AG04450 (cell line): ENCODE measurements at regions of chr1 and their contacts with region 1.

Region 1: DNA sequence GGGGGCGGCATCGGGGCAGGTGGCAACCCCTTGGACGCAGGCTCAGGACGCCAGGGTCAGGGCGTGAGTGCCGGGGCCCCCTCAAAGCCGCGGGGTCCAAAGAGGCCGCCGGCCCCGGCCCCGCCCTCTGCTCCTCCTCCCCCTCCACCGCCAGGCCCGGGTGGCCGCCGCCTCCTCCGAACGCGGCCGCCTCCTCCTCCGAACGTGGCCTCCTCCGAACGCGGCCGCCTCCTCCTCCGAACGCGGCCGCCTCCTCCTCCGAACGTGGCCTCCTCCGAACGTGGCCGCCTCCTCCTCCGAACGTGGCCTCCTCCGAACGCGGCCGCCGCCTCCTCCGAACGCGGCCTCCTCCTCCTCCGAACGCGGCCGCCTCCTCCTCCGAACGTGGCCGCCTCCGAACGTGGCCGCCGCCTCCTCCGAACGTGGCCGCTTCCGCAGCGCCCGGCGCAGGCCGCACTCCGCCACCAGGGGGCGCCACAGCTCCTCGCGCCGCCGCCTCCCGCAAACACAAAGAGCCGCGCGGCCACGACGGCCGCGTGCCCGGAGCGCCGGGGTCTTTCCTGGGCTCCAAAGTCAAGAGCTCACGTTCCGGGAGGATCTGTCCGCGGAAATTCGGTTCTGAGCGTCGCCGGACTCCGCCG is 19.3 kb upstream of the SAMD11 start:
- DNase-seq: no peak
- H3K4me3 ChIP-seq: peak overlapping the region; percentile 52
- H3K27ac ChIP-seq: no peak overlapping the region
- H3K27me3 ChIP-seq: peaks cover 1% of the 10 kb centered on the region
- CTCF ChIP-seq: peak; percentile 62

Region 2: DNA sequence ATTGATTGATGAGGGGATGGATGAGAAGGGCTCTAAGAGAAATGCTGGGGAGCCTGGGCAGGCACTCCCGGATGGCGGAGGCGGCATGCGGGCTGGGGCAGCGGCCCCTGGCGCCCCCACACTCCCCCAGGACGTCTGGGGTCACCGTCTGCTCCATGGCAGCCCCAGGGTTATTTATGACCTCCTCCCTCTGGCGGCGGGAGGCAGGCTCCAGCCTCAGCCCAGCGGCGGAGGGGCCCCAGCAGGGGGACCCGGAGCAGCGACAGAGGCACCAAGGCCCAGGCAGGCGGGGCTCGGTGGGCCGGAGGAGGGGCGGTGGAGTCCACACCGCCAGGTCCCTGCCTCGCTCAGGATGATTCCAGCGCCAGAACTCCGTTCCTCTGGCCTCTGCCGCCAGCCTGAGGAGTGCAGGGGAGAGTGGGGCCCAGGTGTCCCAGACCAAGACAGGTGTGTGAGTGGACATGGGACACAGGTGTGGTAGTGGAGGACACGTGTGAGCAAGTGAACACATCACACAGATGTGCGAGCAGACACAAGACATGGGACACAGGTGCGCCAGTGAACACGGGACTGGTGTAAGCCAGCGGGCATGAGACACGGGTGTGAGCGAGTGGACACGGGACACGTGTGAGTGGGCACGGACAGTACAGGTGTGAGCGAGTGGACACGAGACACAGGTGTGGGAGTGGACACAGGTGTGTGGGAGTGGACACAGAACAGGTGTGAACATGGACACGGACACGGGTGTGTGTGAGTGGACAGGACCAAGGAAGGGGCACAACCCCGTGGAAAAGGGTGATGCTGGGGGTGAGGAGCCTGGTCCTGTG is 16.8 kb after region 1 on chr1:
- CTCF ChIA-PET with region 1: interaction called, 15 read pairs
- POLR2A ChIA-PET with region 1: interaction called, 3 read pairs
- DNase-seq: peak; percentile 36
- H3K4me3 ChIP-seq: no peak overlapping the region
- H3K27ac ChIP-seq: no peak overlapping the region
- H3K27me3 ChIP-seq: peaks cover 9% of the 10 kb centered on the region
- CTCF ChIP-seq: peak; percentile 58

Region 3: GRCh38 chr1:940106-941014 is 35.9 kb after region 1 on chr1:
- CTCF ChIA-PET with region 1: interaction called, 10 read pairs
- POLR2A ChIA-PET with region 1: interaction called, 3 read pairs
- DNase-seq: no peak
- H3K4me3 ChIP-seq: peak overlapping the region; percentile 32; the same call in 1 of the 2 replicates
- H3K27ac ChIP-seq: peak overlapping the region; percentile 11
- H3K27me3 ChIP-seq: peaks cover 4% of the 10 kb centered on the region
- CTCF ChIP-seq: no peak

Region 4: GRCh38 chr1:951364-951763 is 46.9 kb after region 1 on chr1:
- CTCF ChIA-PET with region 1: interaction called, 12 read pairs
- POLR2A ChIA-PET with region 1: no interaction called
- DNase-seq: no peak
- H3K4me3 ChIP-seq: no peak overlapping the region
- H3K27ac ChIP-seq: no peak overlapping the region
- H3K27me3 ChIP-seq: no peaks in the 10 kb centered on the region
- CTCF ChIP-seq: peak; percentile 55

Region 5: DNA sequence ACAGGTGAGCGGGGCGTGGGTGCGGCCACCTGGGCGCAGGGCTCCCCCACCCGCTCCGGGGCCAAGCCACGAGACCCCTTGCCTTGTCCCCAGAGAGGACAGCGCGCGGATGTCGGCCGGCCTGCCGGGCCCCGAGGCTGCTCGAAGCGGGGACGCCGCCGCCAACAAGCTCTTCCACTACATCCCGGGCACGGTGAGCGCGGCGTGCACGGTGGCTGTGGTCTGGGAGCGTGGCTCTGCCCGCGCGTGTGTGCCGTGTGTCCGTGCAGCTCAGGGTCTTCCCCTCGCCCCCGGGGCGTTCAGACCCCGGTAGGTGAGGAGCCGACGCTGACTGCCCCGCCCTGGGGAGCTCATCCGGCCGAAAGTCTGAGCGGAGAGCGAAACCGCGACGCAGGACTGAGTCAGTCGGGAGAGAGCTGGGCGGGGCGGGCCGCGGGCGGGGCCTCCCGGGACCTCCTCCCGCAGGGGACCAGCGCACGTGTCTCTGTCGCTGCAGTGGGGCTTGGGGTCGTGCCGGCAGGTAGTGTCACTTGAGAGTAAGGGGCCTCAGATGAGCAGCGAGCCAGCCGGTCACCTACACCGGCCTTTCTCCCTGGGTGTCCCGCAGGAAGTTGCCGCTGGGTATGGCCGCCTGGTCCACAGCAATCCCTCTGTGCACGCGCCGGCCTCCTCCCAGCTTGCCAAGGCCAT is 62.3 kb after region 1 on chr1:
- CTCF ChIA-PET with region 1: interaction called, 11 read pairs
- POLR2A ChIA-PET with region 1: interaction called, 5 read pairs
- DNase-seq: no peak
- H3K4me3 ChIP-seq: peak overlapping the region; percentile 74
- H3K27ac ChIP-seq: no peak overlapping the region
- H3K27me3 ChIP-seq: peaks cover 18% of the 10 kb centered on the region
- CTCF ChIP-seq: no peak

Region 6: DNA sequence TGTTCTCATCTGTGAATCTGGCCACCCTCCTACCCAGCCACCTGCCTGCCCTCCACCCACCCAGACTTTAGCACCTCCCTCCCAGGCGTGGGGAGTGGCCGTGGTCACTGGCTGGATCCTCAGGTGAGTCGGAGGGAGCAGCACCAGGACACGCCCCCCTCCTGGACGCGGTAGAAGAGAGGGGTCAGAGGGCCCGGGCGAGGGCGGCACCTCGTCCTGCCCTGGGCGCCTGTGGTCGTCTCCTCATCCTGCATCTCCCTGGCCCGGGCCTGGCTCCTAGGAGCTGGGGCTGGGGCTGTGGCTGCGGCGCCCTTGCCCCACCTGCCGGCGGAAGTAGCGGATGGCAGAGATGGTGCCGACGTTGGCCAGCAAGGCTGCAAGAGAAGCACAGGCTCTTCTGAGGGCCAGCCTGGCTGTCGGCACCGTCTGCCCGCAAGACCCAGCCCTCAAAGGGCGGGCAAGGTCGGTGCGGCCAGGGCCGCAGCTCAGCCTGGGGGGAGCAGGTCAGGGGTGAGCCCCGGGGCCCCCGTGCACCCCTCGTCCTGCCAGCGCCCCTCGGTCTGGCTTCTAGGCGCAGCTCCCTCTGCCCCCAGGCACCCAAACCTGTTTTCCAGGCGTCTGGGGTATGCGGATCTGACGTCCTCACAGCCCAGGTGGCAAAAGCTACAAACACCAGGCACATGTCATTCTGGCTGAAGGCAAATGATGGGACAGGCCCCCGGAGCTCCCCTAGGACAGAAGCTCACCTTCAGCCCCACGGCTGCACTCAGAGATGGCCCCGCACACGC is 71.7 kb after region 1 on chr1:
- CTCF ChIA-PET with region 1: interaction called, 14 read pairs
- POLR2A ChIA-PET with region 1: no interaction called
- DNase-seq: no peak
- H3K4me3 ChIP-seq: no peak overlapping the region
- H3K27ac ChIP-seq: no peak overlapping the region
- H3K27me3 ChIP-seq: peaks cover 18% of the 10 kb centered on the region
- CTCF ChIP-seq: peak; percentile 69

Region 7: DNA sequence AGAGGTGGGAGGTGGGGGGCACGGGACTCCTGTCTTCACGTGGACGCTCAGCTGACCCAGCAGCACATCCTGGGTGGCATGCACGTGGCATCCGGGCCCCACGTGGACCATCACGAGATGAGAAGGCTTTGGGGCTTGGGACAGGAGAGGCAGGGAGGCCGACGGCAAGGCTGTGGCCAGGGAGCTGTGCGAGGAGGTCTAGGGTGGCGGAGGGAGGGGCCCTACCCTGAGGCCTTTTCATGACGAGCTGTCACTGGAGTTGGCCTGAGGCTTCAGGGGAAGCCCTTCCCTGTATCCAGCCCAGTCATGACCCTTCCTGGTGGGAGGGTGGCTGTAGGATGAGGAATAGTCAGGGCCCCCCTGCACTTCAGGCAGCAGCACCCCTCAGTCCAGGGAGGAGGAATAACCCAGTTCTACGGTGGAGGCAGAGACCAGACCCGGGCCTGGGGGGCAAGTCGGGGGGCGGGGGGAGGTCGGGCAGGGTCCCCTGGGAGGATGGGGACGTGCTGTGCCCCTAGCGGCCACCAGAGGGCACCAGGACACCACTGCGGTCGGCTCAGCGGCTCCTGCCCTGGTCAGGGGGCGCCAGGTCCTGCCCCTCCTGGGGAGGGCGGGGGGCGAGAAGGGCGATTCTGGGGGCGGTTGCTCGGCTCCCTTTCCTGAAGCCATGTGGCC is 79.5 kb after region 1 on chr1:
- CTCF ChIA-PET with region 1: interaction called, 10 read pairs
- POLR2A ChIA-PET with region 1: no interaction called
- DNase-seq: no peak
- H3K4me3 ChIP-seq: peak overlapping the region; percentile 17
- H3K27ac ChIP-seq: no peak overlapping the region
- H3K27me3 ChIP-seq: peaks cover 35% of the 10 kb centered on the region
- CTCF ChIP-seq: peak; percentile 78

Region 8: DNA sequence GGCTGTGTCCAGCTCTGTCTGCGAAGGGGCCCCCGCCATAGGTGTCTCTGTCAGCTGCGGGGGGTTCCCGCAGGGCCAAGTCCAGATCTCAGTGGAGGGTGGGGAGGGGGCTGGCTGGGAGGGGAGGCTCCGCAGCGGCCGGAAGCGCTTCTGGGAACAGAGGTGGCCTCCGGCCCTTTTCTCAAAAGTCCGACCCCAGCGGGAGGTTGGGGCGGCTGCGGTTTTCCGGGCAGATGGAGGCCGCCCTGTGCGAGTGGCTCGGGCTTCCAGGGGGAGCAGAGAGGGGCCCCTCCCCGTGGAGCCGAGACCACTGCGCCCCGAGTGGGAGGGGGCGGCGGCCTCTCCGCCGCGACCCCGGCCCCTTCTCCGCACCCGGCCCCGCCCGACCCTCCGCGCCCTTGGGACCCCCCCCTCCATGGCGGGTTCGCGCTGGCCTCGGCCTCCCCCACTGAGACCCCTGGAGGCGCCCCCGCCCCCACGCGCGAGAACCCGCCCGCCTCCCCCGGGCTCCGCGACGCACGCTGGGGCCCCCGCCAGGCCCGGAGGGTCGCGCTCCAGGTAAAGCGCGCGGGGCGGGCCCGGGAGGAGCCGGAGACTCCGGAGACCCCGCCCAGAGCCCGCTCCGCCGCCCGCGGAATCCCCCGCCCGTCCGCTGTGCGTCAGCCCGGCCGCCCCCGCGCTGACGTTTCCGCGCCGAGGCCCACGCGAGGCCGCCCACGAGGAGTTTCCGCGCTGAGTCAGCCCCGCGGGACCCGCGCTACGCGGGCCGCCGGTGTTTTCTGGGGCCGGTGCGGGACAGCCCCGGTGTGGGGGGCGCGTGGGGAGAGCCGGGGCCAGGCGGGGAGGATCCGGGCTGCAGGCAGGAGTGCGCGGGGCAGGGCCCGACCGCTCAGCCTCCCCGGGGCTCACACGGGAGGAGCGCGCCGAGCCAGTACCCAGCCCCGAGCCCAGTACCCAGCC is 296.7 kb after region 1 on chr1:
- CTCF ChIA-PET with region 1: no interaction called
- POLR2A ChIA-PET with region 1: no interaction called
- DNase-seq: peak; percentile 15
- H3K4me3 ChIP-seq: peak overlapping the region; percentile 46; the same call in 1 of the 2 replicates
- H3K27ac ChIP-seq: no peak overlapping the region
- H3K27me3 ChIP-seq: peaks cover 4% of the 10 kb centered on the region
- CTCF ChIP-seq: no peak